ENCODE measurements at regions of chr10 and their contacts with region 1.

Region 1: DNA sequence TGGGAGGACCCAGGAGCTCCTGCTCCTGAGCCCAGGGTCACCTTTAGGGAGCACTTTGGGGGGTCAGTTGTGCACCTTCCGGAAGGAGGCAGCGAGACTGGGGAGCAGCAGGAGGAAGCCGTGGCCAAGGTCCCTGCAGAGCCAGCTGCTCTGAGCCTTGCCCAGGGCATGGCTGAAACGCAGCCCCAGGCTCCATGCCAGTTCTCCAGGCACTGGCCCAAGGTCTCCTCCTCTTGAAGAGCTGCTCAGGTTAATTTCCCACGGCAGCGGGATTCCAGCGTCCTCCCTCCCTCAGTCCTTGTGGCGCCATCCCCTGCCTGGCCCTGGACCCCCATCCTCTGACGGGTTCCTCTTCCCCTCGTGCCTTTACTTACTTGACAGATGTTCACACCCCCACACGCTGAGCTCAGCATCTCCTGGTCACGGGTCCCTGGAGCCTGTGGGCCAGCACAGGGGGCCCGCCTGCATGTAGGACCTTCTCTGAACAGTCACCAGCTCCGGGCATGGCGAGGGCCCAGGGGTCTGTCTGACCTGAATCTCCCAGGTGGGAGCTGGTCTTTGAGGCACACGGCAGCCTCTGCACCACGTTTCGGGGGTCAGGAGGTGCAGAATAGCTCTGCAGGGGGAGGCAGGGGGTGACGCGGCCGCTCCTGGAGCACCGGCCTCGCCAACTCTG is 16.7 kb upstream of the CFAP46 start:
- DNase-seq: no peak
- H3K4me3 ChIP-seq: no peak overlapping the region
- H3K27ac ChIP-seq: no peak overlapping the region
- H3K4me1 ChIP-seq: no peaks in the 10 kb centered on the region
- H3K27me3 ChIP-seq: no peaks in the 10 kb centered on the region
- CTCF ChIP-seq: no peak
- POLR2A ChIP-seq: no peak

Region 2: GRCh38 chr10:132506711-132507408 is 452.2 kb before region 1 on chr10:
- intact Hi-C with region 1: loop called (anchors 10 kb)
- DNase-seq: peak in 1 of 2 donors; percentile 40
- H3K4me3 ChIP-seq: no peak overlapping the region
- H3K27ac ChIP-seq: peak overlapping the region; percentile 29 to 69
- H3K4me1 ChIP-seq: peaks cover 0 to 2% of the 10 kb centered on the region in 2 donors
- H3K27me3 ChIP-seq: no peaks in the 10 kb centered on the region
- CTCF ChIP-seq: no peak
- POLR2A ChIP-seq: no peak